AG04450 (cell line): ENCODE measurements at regions of chrX and their contacts with region 1.

Region 1: DNA sequence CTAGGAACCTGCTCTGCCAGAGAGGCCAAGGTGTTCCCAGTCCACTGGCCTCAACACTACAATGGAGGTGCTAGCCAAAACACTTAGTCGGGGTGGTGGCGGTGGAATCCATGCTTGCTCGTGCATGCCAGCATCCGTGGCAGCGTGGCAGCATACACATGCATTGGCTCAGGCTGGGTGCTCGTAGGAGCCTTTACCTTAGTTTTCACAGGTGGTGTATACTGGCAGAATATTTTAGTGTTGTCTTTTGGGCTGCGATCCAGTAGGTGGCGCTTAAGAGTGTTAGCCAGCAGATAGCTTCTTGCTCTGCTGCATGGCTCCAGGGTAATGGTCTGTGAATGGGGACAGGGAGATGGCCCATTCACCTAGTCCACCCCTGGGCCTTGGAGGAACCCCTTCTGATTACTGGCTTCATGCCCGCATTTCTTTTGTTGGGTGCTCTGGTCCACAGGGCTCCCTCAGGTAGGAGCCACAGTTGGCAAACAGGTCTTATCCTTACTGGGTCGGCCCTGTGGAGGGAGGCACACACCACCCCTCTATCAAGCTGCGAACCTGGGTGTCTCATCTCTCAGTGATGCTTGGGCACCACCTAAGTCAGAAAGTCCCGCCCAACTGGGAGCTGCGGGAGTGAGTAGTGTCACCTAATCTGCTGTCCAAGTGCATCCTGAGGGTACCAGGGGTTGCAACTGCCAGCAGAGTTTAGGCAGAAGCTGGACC is 40.0 kb downstream of the RIPPLY1 start:
- DNase-seq: no peak
- H3K4me3 ChIP-seq: no peak overlapping the region
- H3K27ac ChIP-seq: no peak overlapping the region
- H3K27me3 ChIP-seq: no peaks in the 10 kb centered on the region
- CTCF ChIP-seq: peak; percentile 17; the same call in 1 of the 2 replicates

Region 2: DNA sequence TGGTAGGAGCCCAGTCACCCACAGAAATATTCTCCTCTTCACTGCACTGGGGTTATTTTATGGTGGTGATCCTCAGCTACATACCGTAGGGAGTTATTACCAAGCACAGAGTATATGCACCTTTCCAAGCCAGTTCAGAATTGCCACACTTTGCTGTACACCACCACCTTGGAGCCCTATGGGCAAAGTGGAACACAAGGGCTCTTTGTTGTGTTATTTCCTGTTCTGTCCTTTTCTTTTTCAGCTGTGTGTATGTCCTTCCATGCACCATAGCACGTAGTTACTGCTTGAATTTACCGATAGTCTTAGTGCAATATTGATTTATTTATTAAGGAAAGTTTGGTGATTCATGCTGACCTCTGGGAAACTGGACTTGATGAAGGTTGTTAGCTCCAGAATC is 128.3 kb before region 1 on chrX:
- CTCF ChIA-PET with region 1: interaction called, 10 read pairs
- POLR2A ChIA-PET with region 1: no interaction called
- DNase-seq: no peak
- H3K4me3 ChIP-seq: no peak overlapping the region
- H3K27ac ChIP-seq: no peak overlapping the region
- H3K27me3 ChIP-seq: no peaks in the 10 kb centered on the region
- CTCF ChIP-seq: no peak

Region 3: GRCh38 chrX:106976416-106976815 is 113.3 kb after region 1 on chrX:
- CTCF ChIA-PET with region 1: no interaction called
- POLR2A ChIA-PET with region 1: no interaction called
- DNase-seq: no peak
- H3K4me3 ChIP-seq: no peak overlapping the region
- H3K27ac ChIP-seq: no peak overlapping the region
- H3K27me3 ChIP-seq: no peaks in the 10 kb centered on the region
- CTCF ChIP-seq: no peak

Region 4: DNA sequence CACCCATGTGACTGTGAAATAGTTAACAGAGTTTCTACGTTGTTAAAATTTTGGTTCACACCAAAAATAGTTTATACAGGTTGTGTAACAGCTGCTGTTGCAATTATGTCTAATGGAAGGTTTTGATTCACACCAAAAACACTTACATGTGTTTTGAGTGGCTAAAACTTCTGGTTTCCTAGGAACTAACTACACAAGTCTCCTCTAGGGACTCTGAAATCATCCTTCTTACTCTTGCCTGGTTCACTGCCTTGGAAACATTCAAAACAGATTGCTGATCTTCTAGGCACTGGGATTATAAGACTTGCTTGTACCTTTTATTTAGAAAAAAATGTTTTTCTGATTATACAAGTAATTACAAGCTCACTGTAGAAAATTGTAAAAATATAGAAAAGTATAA is 151.8 kb after region 1 on chrX:
- CTCF ChIA-PET with region 1: no interaction called
- POLR2A ChIA-PET with region 1: no interaction called
- DNase-seq: no peak
- H3K4me3 ChIP-seq: no peak overlapping the region
- H3K27ac ChIP-seq: no peak overlapping the region
- H3K27me3 ChIP-seq: no peaks in the 10 kb centered on the region
- CTCF ChIP-seq: no peak

Region 5: GRCh38 chrX:107292711-107293495 is 429.8 kb after region 1 on chrX:
- CTCF ChIA-PET with region 1: no interaction called
- POLR2A ChIA-PET with region 1: no interaction called
- DNase-seq: no peak
- H3K4me3 ChIP-seq: no peak overlapping the region
- H3K27ac ChIP-seq: no peak overlapping the region
- H3K27me3 ChIP-seq: no peaks in the 10 kb centered on the region
- CTCF ChIP-seq: no peak